GM10248 (cell line): ENCODE measurements at regions of chr20 and their contacts with region 1.

Region 1: DNA sequence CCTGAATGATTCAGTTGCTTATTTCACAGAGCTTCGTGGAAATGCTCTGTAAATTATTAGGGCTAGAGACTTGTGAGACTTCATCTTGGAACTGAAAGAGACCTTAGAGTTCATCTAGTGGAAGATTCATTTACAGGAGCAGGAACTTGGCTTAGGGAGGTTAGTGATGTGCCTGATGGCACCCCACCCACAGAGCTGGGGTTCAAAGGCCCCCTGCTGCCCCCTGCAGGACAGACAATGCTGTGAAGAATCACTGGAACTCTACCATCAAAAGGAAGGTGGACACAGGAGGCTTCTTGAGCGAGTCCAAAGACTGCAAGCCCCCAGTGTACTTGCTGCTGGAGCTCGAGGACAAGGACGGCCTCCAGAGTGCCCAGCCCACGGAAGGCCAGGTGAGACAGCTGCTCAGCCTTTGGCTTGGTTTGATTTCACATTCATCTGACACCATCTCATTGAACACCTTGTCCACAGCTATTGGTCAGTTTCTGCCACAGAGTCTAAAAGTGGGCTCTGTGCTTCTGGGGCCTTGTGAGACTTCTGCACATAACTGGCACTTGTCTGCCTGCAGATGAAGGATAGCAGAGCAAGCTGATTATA is 25.1 kb downstream of the MYBL2 start:
- DNase-seq: peak; percentile 80
- CTCF ChIP-seq: peak; percentile 68

Region 2: GRCh38 chr20:43448748-43449535 is 243.1 kb before region 1 on chr20:
- CTCF ChIA-PET with region 1: interaction called, 23 read pairs
- POLR2A ChIA-PET with region 1: no interaction called
- DNase-seq: peak; percentile 66
- CTCF ChIP-seq: peak; percentile 75

Region 3: DNA sequence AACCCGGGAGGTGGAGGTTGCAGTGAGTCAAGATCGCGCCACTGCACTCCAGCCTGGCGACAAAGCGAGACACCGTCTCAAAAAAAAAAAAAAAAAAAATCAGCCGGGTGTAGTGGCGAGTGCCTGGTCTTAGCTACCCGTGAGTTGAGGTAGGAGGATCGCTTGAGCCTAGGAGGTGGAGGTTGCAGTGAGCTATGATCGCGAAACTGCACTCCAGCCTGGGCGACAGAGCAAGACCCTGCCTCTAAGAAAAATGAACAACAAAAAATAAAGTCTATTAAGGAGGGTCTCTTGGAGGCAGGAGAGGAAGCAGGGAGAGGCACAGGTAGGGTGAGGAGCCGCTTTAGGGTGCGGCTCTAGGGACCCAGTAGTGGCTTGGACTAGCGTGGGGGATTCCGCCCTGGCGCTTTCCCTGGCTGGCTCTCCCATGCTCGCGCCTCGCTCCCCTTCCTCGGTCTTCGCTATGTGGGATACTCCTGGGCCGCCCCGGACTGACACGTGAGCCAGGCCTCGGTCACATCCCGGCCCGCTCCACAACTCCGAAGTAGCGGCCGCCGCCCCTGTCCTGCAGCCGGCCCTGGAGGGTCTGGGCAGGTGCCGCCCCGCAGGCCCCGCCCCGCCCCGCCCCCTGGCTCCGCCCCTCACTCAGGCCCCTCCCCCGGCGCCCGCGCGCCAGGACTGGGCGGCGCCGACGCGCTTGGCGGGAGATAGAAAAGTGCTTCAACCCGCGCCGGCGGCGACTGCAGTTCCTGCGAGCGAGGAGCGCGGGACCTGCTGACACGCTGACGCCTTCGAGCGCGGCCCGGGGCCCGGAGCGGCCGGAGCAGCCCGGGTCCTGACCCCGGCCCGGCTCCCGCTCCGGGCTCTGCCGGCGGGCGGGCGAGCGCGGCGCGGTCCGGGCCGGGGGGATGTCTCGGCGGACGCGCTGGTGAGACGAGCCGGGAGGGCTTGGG is 25.4 kb before region 1 on chr20 and contains the start of gene MYBL2:
- CTCF ChIA-PET with region 1: interaction called, 17 read pairs
- POLR2A ChIA-PET with region 1: no interaction called
- DNase-seq: peak; percentile 92
- CTCF ChIP-seq: no peak

Region 4: DNA sequence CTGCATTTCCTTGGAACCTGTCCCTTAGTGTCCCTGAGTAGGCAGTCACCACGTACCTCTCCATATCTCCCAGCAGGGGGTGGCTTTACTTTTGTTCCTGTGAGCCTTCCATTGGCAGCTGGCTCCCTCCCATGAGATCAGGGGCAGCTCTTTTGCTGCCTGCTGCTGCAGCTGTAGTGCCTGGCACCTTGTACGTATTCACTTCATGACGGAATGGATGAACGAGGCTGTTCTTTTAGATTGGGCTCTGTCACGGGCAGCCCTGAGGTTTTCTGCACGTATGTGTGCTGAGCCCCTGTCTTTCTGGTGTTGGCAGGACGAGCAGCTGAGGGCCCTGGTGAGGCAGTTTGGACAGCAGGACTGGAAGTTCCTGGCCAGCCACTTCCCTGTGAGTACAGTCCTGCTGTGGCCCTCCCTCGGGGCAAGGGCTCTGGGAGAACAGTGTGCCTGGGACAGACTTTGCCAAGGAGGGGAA is 10.5 kb before region 1 on chr20:
- CTCF ChIA-PET with region 1: interaction called, 37 read pairs
- POLR2A ChIA-PET with region 1: no interaction called
- DNase-seq: peak; percentile 31
- CTCF ChIP-seq: peak; percentile 8

Region 5: DNA sequence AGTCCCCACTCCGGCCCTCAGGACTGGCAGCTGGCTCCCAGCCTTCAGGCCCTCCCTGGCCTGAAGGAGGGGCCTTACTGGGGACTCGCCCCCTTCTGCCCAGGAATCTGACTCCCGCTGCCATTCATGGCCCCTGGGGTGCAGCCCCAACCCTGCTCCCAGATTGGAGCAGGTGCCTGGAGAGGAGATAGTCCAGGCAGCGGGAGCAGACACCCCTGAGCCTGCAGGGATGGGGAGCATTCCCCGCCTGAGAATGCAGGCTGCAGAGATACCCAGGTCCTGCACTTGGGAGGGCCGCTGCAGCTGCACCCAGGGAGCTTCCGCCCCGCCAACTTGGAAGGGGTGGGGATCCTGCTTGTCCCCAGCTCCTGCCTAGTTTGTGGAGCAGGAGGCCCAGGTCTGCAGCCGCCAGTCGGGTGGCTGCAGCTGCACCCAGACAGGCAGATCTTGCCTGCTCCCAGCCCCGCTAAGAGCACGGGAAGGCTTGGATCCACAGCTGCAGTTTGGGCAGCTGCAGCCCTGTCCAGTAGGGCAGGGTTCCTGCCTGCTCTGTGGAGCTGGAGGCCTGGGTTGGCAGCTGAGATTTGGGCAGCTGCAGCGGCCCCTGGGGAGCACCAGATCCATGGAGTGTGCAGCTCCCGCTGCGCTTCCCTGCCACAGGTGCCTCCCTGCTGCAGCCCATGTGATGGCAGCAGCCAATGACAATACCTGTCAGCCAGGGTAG is 29.6 kb after region 1 on chr20:
- CTCF ChIA-PET with region 1: interaction called, 10 read pairs
- POLR2A ChIA-PET with region 1: no interaction called
- DNase-seq: no peak
- CTCF ChIP-seq: no peak

Region 6: GRCh38 chr20:43903953-43904826 is 212.2 kb after region 1 on chr20:
- CTCF ChIA-PET with region 1: no interaction called
- POLR2A ChIA-PET with region 1: no interaction called
- DNase-seq: no peak
- CTCF ChIP-seq: no peak